Activated CD4-positive, alpha-beta memory T cell treated with anti-CD3 and anti-CD28 coated beads, Interleukin-2, amount 10 ng/mL, durations not matched to agents 7 days and 5 days (primary cell): ENCODE measurements at regions of chr2 and their contacts with region 1.

Region 1: GRCh38 chr2:200901459-200902072 is 12.4 kb downstream of the NIF3L1 start:
- DNase-seq: peak; percentile 81
- H3K4me3 Mint-ChIP-seq: no peak overlapping the region
- H3K27ac Mint-ChIP-seq: peak overlapping the region; percentile 53
- H3K4me1 Mint-ChIP-seq: peaks cover 32% of the 10 kb centered on the region
- H3K27me3 Mint-ChIP-seq: no peaks in the 10 kb centered on the region

Region 2: GRCh38 chr2:200993097-200993496 is 91.5 kb after region 1 on chr2:
- CTCF ChIA-PET with region 1: no interaction called
- POLR2A ChIA-PET with region 1: no interaction called
- DNase-seq: no peak
- H3K4me3 Mint-ChIP-seq: no peak overlapping the region
- H3K27ac Mint-ChIP-seq: no peak overlapping the region
- H3K4me1 Mint-ChIP-seq: no peaks in the 10 kb centered on the region
- H3K27me3 Mint-ChIP-seq: no peaks in the 10 kb centered on the region

Region 3: GRCh38 chr2:201071479-201072200 is 170.1 kb after region 1 on chr2 and contains the starts of genes HYCC2 and NDUFB3:
- CTCF ChIA-PET with region 1: interaction called, 112 read pairs
- POLR2A ChIA-PET with region 1: interaction called, 7 read pairs
- DNase-seq: peak; percentile 95
- H3K4me3 Mint-ChIP-seq: peak within 1 kb of the TSS; percentile 96
- H3K27ac Mint-ChIP-seq: peak within 1 kb of the TSS; percentile 88
- H3K4me1 Mint-ChIP-seq: peaks cover 57% of the 10 kb centered on the region
- H3K27me3 Mint-ChIP-seq: no peaks in the 10 kb centered on the region
- total RNA-seq, gene HYCC2: 27.9 to 31.9 TPM
- total RNA-seq, gene NDUFB3: 133 to 135 TPM

Region 4: DNA sequence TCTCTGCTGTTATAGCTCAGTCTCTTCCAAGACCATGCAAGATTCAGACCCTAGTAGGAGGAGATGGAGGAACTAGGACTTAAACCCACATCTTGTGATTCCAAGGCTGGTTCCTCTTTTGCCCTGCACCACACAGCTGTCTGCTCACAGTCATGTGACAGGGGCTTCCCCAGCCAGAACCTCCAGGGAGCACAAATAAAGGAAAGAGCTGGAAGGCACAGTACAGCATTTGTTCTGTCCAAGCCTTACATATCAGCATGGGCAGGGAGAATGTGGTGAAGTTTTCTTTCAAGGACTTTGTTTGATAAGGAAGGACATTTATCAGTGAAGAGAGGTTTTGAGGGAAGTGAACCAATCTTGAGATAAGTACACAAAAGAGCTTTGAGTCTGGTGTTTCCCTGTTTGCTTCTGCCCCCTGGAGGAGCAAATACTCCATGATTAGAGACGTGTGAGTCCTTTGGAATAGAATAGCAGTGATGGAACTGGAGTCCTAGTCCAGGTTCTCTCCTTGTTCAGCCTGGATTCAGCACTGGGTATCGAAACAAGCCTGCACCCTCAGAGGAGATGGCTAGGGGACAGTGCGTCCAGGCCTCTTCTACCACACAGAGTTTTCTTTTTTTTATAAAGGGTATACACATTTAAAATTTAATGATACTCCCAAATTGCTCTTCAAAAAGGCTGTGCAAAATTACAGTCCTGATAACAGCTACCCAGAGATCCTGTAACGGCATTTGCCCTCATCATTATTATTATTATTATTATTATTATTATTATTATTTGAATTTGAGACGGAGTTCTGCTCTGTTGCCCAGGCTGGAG is 256.8 kb after region 1 on chr2:
- CTCF ChIA-PET with region 1: interaction called, 17 read pairs
- POLR2A ChIA-PET with region 1: no interaction called
- DNase-seq: peak; percentile 63
- H3K4me3 Mint-ChIP-seq: no peak overlapping the region
- H3K27ac Mint-ChIP-seq: peak overlapping the region; percentile 50
- H3K4me1 Mint-ChIP-seq: peaks cover 15% of the 10 kb centered on the region
- H3K27me3 Mint-ChIP-seq: no peaks in the 10 kb centered on the region

Region 5: DNA sequence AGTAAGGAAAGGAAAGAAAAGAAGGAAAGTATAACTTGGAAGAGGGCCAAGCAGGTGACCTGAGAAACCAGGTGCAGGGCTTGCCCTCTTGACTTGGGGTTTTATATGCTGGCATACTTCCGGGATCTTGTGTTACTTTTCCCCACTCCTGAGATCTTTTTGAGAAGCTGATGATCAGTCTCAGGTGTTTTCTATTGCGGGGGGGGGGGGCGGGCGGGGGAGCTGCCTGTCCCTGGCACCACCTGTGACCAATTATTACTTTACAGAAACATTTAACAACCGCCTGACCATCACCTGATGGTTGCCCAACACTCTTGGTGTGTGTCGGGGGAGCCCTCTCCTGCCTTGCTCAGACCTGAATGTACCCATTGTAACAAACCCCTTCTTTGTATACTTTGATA is 274.5 kb after region 1 on chr2:
- CTCF ChIA-PET with region 1: interaction called, 35 read pairs
- POLR2A ChIA-PET with region 1: interaction called, 5 read pairs
- DNase-seq: no peak
- H3K4me3 Mint-ChIP-seq: no peak overlapping the region
- H3K27ac Mint-ChIP-seq: no peak overlapping the region
- H3K4me1 Mint-ChIP-seq: peaks cover 25% of the 10 kb centered on the region
- H3K27me3 Mint-ChIP-seq: peaks cover 3% of the 10 kb centered on the region